Activated CD4-positive, alpha-beta memory T cell treated with anti-CD3 and anti-CD28 coated beads, Interleukin-2, amount 10 ng/mL, durations not matched to agents 7 days and 5 days (primary cell): ENCODE measurements at regions of chr6 and their contacts with region 1.

Region 1: GRCh38 chr6:112043032-112044007 is 10.6 kb upstream of the CCN6 start:
- DNase-seq: peak; percentile 92
- H3K4me3 Mint-ChIP-seq: peak overlapping the region; percentile 95
- H3K27ac Mint-ChIP-seq: peak overlapping the region; percentile 98
- H3K4me1 Mint-ChIP-seq: peaks cover 19% of the 10 kb centered on the region
- H3K27me3 Mint-ChIP-seq: no peaks in the 10 kb centered on the region

Region 2: DNA sequence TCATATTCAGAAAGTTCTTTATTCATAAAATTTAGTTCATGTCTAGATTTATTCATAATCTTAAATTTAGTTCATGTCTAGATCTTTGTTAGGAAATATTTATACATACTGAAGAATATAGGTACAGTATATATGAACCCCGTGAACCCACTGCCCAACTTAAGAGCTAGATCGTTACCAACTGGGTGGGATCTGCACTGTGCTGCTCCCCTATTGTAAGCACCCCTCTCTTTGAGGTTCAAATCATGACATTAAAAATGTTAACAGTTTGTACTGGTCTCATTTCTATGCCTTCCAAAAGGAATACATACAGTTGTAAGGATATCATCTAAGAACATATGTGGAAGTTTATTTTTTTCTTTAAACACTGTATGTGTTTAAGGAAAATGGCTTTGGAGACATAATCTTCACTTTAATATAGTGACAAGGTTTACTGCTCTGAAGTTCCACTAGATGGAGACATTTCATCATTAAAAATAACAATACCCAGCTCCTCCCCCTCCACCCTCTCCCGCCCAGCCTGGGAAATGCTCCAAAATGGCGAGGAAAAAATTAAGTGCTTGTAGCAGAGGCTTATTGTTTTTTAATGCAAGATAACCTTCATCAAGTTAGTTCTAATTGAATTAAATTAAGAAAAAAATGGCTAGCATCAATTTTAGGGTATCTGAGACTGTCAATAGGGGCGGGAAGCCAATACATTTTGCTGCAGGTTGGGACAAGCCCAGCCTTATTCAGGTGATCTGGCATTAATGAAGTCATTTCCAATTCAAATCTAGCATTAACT is 333.5 kb before region 1 on chr6:
- CTCF ChIA-PET with region 1: interaction called, 65 read pairs
- POLR2A ChIA-PET with region 1: interaction called, 6 read pairs
- DNase-seq: peak; percentile 61
- H3K4me3 Mint-ChIP-seq: peak overlapping the region; percentile 8
- H3K27ac Mint-ChIP-seq: peak overlapping the region; percentile 59
- H3K4me1 Mint-ChIP-seq: peaks cover 51% of the 10 kb centered on the region
- H3K27me3 Mint-ChIP-seq: no peaks in the 10 kb centered on the region

Region 3: GRCh38 chr6:112010328-112010727 is 33.0 kb before region 1 on chr6:
- CTCF ChIA-PET with region 1: interaction called, 35 read pairs
- POLR2A ChIA-PET with region 1: interaction called, 3 read pairs
- DNase-seq: no peak
- H3K4me3 Mint-ChIP-seq: no peak overlapping the region
- H3K27ac Mint-ChIP-seq: no peak overlapping the region
- H3K4me1 Mint-ChIP-seq: peaks cover 6% of the 10 kb centered on the region
- H3K27me3 Mint-ChIP-seq: no peaks in the 10 kb centered on the region

Region 4: DNA sequence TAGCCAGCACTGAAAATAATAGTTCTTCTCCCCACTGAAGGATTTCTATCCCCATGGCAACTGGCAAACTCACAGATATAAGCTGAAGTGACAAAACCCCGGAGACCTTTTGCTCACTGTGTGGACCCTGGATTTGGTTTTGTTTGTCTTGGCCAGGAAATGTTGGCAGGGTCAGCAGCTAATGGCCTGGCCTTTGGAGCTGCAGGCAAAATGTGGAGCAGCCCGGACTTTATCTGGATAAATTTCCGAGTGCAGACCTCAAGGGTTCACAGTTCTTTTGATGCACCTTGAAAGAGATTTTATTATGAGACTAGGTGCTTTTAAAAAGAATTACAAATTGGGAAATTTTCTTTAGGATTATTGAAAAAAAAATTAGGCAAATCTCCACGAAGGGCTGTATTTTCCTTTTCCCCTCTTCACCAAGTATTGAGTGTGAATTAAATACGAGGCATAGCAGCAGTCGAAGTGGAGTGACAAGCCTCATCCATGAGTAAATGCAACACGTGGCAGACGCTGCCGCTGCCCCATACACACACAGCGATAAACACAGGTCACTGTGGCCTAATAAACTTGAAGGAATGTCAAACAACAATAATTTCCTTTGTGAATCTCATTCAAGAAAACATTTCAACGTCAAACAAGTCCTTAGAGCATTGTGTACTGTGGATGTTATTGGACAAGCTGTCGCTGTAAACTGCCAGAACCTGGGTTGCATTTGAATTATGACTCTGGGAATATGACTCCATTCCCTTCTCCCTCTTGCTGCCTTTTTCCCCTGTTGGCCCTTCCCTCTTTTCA is 24.5 kb before region 1 on chr6:
- CTCF ChIA-PET with region 1: interaction called, 35 read pairs
- POLR2A ChIA-PET with region 1: interaction called, 4 read pairs
- DNase-seq: no peak
- H3K4me3 Mint-ChIP-seq: no peak overlapping the region
- H3K27ac Mint-ChIP-seq: no peak overlapping the region
- H3K4me1 Mint-ChIP-seq: peaks cover 39% of the 10 kb centered on the region
- H3K27me3 Mint-ChIP-seq: no peaks in the 10 kb centered on the region

Region 5: GRCh38 chr6:112029045-112029822 is 14.1 kb before region 1 on chr6:
- CTCF ChIA-PET with region 1: interaction called, 41 read pairs
- POLR2A ChIA-PET with region 1: interaction called, 20 read pairs
- DNase-seq: peak; percentile 77
- H3K4me3 Mint-ChIP-seq: no peak overlapping the region
- H3K27ac Mint-ChIP-seq: peak overlapping the region; percentile 77
- H3K4me1 Mint-ChIP-seq: peaks cover 46% of the 10 kb centered on the region
- H3K27me3 Mint-ChIP-seq: no peaks in the 10 kb centered on the region

Region 6: GRCh38 chr6:112087136-112087911 is 44.0 kb after region 1 on chr6 and contains the starts of genes FAM229B and TUBE1:
- CTCF ChIA-PET with region 1: interaction called, 17 read pairs
- POLR2A ChIA-PET with region 1: interaction called, 6 read pairs
- DNase-seq: peak; percentile 92
- H3K4me3 Mint-ChIP-seq: no peak within 1 kb of the TSS
- H3K27ac Mint-ChIP-seq: no peak within 1 kb of the TSS
- H3K4me1 Mint-ChIP-seq: peaks cover 8% of the 10 kb centered on the region
- H3K27me3 Mint-ChIP-seq: peaks cover 33% of the 10 kb centered on the region
- total RNA-seq, gene FAM229B: 2.7 to 3.4 TPM
- total RNA-seq, gene TUBE1: 23.8 to 28.5 TPM

Region 7: DNA sequence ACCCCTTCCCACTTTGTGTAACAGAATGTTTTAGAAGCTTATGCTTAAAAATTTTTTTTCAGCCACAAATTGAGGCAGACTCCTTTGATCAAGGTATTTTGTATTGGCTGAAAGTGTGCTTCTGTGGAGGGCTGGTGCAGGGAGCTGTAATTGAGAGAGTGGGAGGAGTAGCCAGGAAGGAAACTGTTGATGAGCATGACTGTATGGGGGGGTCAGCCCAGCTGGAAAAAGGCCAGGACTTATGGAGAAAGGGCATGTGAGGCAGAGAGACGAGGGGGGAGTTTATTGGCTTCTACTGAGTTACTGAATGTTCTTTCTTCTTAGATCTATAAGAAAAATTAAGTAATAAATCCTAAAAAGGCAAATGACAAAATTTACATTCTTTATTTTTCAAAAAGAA is 317.2 kb after region 1 on chr6:
- CTCF ChIA-PET with region 1: no interaction called
- POLR2A ChIA-PET with region 1: no interaction called
- DNase-seq: no peak
- H3K4me3 Mint-ChIP-seq: no peak overlapping the region
- H3K27ac Mint-ChIP-seq: no peak overlapping the region
- H3K4me1 Mint-ChIP-seq: no peaks in the 10 kb centered on the region
- H3K27me3 Mint-ChIP-seq: no peaks in the 10 kb centered on the region